ENCODE measurements at regions of chr16 and their contacts with region 1.

Region 1: DNA sequence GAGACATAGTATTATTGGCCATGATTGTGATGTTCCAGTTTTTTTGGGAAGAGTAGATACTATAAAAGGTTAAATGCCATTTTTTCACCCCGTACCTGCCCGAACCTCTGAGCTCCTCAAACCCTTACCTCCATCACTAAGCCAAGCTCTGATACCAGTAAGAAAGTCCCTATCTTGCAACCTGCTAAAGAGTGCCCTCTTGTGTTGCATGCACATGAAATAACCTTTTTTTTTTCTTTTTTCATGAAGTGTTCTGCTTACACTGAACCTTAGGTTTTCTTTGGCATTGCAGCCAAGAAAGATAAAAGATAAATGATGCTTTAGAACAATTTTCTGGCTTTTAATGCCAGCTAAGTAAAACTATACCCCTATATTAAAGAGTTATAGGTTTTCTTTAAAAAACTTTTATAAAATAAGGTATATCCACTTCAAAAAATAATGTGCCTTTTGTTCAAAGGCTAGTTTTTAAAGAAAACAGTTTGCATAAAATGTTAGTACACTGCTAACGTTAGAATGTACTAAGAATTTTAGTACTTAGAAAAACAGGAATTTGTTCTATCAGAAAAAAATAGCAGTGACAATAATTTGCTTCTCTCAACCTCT is 295.3 kb upstream of the PMFBP1 start:
- DNase-seq: no peak
- H3K4me3 Mint-ChIP-seq: no peak overlapping the region
- H3K27ac Mint-ChIP-seq: no peak overlapping the region
- H3K4me1 Mint-ChIP-seq: no peaks in the 10 kb centered on the region
- H3K27me3 Mint-ChIP-seq: no peaks in the 10 kb centered on the region

Region 2: DNA sequence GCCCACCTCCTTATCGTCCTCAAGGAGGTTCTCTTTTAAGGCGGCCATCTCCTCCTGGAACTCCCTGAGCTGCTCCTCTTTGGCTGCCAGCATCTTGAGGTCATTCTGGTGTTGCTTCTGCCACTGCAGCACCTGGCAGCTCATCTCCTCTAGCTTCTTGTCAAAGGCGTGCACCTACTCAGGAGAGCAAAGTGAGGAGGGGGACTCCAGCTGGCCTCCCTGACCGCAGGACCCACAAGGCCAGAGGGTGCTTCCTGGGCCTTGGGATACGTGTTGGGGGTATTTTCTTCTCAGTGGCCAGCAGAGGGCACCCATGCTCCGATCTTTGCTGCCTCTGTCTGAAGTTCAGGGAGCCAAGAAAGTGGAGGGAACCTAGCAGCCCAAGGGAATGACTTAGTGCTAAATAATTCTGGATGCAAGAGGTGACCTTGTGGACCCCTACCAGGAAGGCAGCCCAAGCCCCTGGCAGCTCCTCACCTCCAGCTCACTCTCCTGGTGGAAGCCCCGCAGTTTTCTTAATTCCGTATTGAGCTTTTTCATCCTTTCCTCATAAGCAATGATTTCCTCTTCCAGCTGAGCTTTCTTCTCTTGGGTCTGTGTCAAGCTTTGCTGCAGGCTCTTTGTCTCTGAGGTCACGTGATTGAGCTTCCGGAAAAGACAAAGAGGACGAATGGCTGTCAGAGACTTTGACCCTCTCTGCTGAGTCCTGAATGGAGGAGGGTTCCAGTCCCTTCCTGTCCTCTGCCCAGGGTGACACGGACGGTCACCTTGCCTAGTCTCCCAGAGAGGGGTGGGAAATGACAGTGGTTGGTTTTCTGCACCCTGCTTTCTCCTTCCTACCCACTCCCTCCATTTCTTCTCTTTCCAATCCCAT is 342.3 kb before region 1 on chr16:
- CTCF ChIA-PET with region 1: interaction called, 15 read pairs
- DNase-seq: peak; percentile 72
- H3K4me3 Mint-ChIP-seq: no peak overlapping the region
- H3K27ac Mint-ChIP-seq: no peak overlapping the region
- H3K4me1 Mint-ChIP-seq: no peaks in the 10 kb centered on the region
- H3K27me3 Mint-ChIP-seq: peaks cover 16% of the 10 kb centered on the region

Region 3: DNA sequence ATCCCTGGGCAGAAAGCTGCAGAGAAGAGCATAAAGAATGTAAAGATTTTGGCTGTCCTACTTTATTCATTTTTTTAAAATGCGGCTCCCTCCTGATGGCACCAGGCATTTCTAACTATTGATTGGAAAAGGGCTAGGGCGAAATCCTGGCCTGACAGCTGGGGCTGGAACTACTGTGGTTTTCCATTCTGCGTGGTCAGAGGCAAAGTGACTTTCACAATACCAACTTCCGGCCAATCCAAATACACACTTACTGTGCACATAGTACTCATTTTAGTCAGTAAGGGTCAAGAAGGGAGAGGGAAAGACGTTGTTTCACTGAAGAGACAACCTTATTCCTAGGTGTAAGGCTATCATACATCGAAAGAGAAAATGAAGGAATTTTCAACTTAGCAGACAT is 181.5 kb before region 1 on chr16:
- CTCF ChIA-PET with region 1: no interaction called
- DNase-seq: no peak
- H3K4me3 Mint-ChIP-seq: no peak overlapping the region
- H3K27ac Mint-ChIP-seq: no peak overlapping the region
- H3K4me1 Mint-ChIP-seq: no peaks in the 10 kb centered on the region
- H3K27me3 Mint-ChIP-seq: no peaks in the 10 kb centered on the region

Region 4: DNA sequence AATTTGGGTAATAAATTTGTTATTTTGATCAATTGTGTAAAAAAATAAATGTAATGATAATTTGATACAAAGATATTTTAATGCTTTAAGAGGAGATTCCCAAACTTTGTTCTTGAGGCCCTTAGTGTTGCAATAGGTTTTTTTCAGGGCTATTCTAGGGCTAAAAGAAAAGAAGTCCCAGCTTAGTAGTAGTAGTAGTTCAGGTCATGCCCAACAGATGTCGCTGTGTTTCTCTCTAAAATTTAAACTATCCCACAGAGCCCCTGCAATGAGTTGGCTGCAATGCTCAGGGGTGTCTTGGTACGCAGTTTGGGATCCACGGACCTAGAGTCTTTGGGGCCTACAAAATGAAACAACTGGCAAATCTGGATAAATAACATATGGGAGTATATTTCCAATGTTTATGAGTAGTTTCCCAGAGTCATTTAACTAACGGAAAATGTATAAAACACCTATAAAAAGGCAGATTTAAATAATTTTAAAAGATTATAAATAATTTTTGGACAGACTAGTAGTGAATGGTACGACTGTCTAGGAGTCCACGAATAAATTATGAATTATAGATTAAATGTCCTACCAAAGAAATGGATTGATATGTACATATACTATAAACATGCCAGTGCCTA is 66.9 kb before region 1 on chr16:
- CTCF ChIA-PET with region 1: interaction called, 11 read pairs
- DNase-seq: peak; percentile 37
- H3K4me3 Mint-ChIP-seq: no peak overlapping the region
- H3K27ac Mint-ChIP-seq: no peak overlapping the region
- H3K4me1 Mint-ChIP-seq: no peaks in the 10 kb centered on the region
- H3K27me3 Mint-ChIP-seq: no peaks in the 10 kb centered on the region

Region 5: GRCh38 chr16:72434159-72434558 is 33.1 kb before region 1 on chr16:
- CTCF ChIA-PET with region 1: no interaction called
- DNase-seq: no peak
- H3K4me3 Mint-ChIP-seq: no peak overlapping the region
- H3K27ac Mint-ChIP-seq: no peak overlapping the region
- H3K4me1 Mint-ChIP-seq: no peaks in the 10 kb centered on the region
- H3K27me3 Mint-ChIP-seq: no peaks in the 10 kb centered on the region

Region 6: DNA sequence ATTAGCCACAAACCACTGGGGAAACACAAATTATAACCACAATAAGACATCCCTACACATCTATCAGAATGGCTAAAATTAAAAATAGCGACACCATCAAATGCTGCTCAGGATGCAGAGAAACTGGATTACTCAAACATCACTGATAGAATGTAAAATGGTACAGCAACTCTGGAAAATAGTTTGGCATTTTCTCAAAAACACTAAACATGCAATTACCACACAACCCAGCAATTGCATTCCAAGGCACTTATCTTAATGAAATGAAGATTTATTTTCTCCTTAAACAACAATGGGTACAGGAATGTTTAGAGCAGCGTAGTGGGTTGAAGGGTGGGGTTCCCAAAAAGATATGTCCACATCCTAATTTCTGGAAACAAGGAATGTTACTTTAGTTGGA is 13.6 kb after region 1 on chr16:
- CTCF ChIA-PET with region 1: no interaction called
- DNase-seq: no peak
- H3K4me3 Mint-ChIP-seq: no peak overlapping the region
- H3K27ac Mint-ChIP-seq: no peak overlapping the region
- H3K4me1 Mint-ChIP-seq: peaks cover 25% of the 10 kb centered on the region
- H3K27me3 Mint-ChIP-seq: no peaks in the 10 kb centered on the region